A549 (cell line): ENCODE measurements at regions of chr17 and their contacts with region 1.

Region 1: DNA sequence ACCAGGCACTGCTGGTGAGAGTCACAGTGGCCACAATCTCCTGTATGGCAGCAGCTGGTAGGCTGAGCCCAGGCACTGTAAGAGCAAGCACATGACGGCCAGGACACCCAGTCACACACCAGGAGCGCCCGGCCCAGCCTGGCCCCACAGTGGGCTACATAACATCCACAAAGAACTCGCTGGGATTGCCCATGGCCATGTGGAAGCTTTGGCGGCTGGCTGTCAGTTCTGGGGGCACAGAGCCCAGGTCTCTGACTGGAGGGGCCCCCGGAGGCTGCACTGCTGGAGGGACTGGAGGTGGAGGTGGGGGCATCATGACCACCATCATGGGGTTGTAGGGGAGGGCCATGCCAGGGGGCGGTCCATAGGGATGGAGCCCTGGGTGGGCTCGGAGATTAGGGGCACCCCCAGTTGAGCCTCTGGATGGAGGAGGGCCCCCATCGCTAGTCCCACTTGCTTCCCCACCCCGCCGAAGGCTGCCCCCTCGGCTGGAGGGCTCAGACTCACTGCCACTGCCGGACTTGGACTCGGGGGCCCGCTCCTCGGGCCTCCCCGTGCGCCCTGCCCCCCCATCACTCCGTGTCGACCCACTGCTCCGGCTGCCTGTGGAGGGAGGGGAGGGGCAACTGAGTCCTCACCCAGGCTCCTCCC is 6.1 kb downstream of the ACADVL start:
- DNase-seq: no peak
- ATAC-seq: no peak
- H3K4me3 ChIP-seq: no peak overlapping the region
- H3K27ac ChIP-seq: no peak overlapping the region
- H3K4me1 ChIP-seq: peaks cover 19% of the 10 kb centered on the region
- CTCF ChIP-seq: no peak
- EP300 ChIP-seq: no peak
- POLR2A ChIP-seq: no peak
- RAD21 ChIP-seq: no peak

Region 2: DNA sequence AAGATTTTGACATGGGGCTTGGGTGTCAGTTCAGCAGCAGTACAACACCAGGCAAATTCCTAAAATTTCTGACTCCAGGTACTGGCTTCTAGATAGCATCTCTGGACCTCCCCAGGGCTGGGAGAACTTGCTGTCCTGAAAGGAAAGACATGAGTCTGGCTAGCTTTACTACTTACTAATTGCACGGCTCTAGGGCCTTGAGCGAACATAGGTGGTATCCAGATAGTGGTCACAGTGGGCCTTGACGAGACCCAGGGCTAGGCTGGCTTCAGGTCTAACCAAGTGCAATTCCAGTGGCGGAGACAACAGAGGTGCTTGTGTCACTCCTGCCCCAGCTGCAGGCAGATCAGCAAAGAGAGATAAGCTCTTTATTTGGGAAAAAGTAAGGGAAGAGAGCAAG is 496.3 kb before region 1 on chr17:
- CTCF ChIA-PET with region 1: no interaction called
- POLR2A ChIA-PET with region 1: no interaction called
- DNase-seq: no peak
- ATAC-seq: no peak
- H3K4me3 ChIP-seq: no peak overlapping the region
- H3K27ac ChIP-seq: no peak overlapping the region
- H3K4me1 ChIP-seq: no peaks in the 10 kb centered on the region
- CTCF ChIP-seq: no peak
- EP300 ChIP-seq: no peak
- POLR2A ChIP-seq: no peak
- RAD21 ChIP-seq: no peak

Region 3: DNA sequence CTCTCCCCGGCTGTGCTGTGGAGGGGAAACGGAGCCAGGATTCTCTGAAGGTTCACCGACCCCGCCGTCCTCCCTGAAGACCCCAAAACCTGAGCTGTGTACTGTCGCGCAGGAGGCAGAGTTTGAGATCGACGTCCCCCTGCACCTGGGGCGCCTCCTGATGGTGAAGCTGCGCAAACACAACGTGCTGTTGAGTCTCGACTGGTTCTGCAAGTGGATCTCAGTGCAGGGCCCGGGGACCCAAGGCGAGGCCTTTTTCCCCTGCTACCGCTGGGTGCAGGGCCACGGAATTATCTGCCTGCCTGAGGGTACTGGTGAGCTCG is 331.7 kb before region 1 on chr17:
- CTCF ChIA-PET with region 1: no interaction called
- POLR2A ChIA-PET with region 1: no interaction called
- DNase-seq: no peak
- ATAC-seq: no peak
- H3K4me3 ChIP-seq: no peak overlapping the region
- H3K27ac ChIP-seq: no peak overlapping the region
- H3K4me1 ChIP-seq: no peaks in the 10 kb centered on the region
- CTCF ChIP-seq: no peak
- EP300 ChIP-seq: no peak
- POLR2A ChIP-seq: no peak
- RAD21 ChIP-seq: peak in 1 of 2 experiments; percentile 34; a peak in 2 of 5 replicates

Region 4: DNA sequence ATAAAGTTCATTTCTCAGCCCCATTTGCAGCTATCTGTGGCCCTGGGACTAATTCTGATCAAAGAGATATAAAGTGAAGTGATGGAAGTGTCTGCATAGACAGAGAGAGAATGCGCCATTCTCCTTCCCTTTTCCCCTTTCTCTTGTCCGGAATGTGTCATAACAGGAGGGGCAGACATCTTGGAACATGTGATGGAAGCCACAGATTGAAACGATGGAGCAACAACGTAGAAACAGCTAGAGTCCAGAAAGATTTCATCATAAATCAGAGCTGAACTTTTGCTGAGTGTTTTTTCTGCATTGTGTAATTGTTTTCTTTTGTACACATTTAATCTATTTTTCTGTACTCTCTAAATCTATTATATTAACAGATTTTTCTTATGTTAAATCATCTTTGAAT is 58.0 kb before region 1 on chr17:
- CTCF ChIA-PET with region 1: no interaction called
- POLR2A ChIA-PET with region 1: interaction called, 10 read pairs
- DNase-seq: no peak
- ATAC-seq: no peak; a peak in 1 of 6 replicates
- H3K4me3 ChIP-seq: no peak overlapping the region
- H3K27ac ChIP-seq: no peak overlapping the region
- H3K4me1 ChIP-seq: peaks cover 2% of the 10 kb centered on the region; the same call in 1 of the 3 replicates
- CTCF ChIP-seq: no peak
- EP300 ChIP-seq: no peak
- POLR2A ChIP-seq: no peak
- RAD21 ChIP-seq: no peak